AG04450 (cell line): ENCODE measurements at regions of chr11 and their contacts with region 1.

Region 1: GRCh38 chr11:35138943-35139721 is at the start of gene CD44:
- DNase-seq: peak; percentile 73
- H3K4me3 ChIP-seq: peak within 1 kb of the TSS; percentile 98
- H3K27ac ChIP-seq: peak within 1 kb of the TSS; percentile 69
- H3K27me3 ChIP-seq: no peaks in the 10 kb centered on the region
- CTCF ChIP-seq: no peak
- polyA plus RNA-seq, gene CD44: 1,799 and 1,817 TPM in 2 replicates

Region 2: GRCh38 chr11:34977089-34977906 is 161.8 kb before region 1 on chr11:
- CTCF ChIA-PET with region 1: no interaction called
- POLR2A ChIA-PET with region 1: interaction called, 15 read pairs
- DNase-seq: peak; percentile 90
- H3K4me3 ChIP-seq: no peak overlapping the region
- H3K27ac ChIP-seq: no peak overlapping the region
- H3K27me3 ChIP-seq: no peaks in the 10 kb centered on the region
- CTCF ChIP-seq: no peak

Region 3: GRCh38 chr11:35126000-35126878 is 12.9 kb before region 1 on chr11:
- CTCF ChIA-PET with region 1: no interaction called
- POLR2A ChIA-PET with region 1: no interaction called
- DNase-seq: no peak
- H3K4me3 ChIP-seq: no peak overlapping the region
- H3K27ac ChIP-seq: no peak overlapping the region
- H3K27me3 ChIP-seq: peaks cover 5% of the 10 kb centered on the region
- CTCF ChIP-seq: no peak

Region 4: GRCh38 chr11:35151241-35151640 is 12.1 kb after region 1 on chr11:
- CTCF ChIA-PET with region 1: no interaction called
- POLR2A ChIA-PET with region 1: interaction called, 13 read pairs
- DNase-seq: no peak
- H3K4me3 ChIP-seq: no peak overlapping the region
- H3K27ac ChIP-seq: no peak overlapping the region
- H3K27me3 ChIP-seq: no peaks in the 10 kb centered on the region
- CTCF ChIP-seq: no peak

Region 5: DNA sequence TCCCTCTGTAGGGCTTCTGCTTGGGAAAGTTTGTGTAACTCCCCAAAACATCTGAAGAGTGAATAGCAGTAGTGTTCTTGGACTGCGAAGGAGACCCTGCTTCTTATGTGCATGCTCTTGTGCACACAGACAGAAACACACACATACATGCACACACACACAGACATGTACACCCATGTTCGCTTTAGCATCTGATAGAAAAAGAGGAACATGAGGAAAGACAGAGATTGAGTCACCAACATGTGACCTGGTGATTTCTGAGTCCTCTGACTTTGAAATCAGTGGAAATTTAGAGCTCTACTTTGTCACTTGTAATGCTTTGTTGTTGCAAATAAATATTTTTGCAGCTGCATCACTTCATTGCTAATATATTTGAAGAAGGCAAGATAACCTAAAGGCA is 23.6 kb after region 1 on chr11:
- CTCF ChIA-PET with region 1: no interaction called
- POLR2A ChIA-PET with region 1: interaction called, 10 read pairs
- DNase-seq: no peak
- H3K4me3 ChIP-seq: no peak overlapping the region
- H3K27ac ChIP-seq: peak overlapping the region; percentile 33
- H3K27me3 ChIP-seq: no peaks in the 10 kb centered on the region
- CTCF ChIP-seq: no peak